HCT116 (cell line): ENCODE measurements at regions of chr5 and their contacts with region 1.

Region 1: DNA sequence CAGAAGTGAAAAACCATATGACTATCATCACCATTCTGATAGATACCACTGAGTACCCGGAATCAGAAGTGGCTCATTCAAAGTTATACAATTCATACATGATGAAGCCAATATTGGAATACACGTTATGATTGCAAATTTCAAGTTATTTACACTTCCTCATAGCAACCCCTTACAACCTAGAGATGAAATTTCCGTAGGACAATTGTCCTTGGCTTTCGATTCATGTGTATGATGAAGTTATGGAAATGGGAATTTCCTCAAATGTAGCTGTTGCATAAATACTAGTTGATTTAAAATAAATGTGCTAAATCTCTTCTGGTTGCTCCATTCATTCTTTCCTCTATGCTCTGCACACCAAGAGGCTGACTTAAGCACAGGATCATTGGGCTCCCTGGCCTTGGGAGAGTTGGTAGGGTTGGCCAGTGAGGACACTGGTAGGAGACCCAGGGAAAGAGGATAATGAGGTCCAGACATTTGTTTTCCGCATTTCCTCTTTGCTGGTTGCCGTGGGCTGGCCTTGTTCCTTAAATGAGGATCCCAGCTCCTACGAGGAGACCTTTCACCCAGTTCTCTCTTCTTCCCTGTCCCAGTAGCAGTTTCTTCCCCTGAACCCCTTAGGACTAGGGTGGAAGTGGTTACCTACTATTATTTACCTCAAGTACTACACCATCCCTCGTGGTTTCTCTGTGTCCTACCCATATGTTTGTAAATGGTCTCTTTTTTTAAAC is 90.3 kb downstream of the ZNF474 start:
- DNase-seq: no peak
- ATAC-seq: no peak
- H3K4me3 ChIP-seq: no peak overlapping the region
- H3K27ac ChIP-seq: no peak overlapping the region
- H3K4me1 ChIP-seq: no peaks in the 10 kb centered on the region
- H3K27me3 ChIP-seq: no peaks in the 10 kb centered on the region
- CTCF ChIP-seq: no peak
- POLR2A ChIP-seq: no peak
- RAD21 ChIP-seq: no peak

Region 2: DNA sequence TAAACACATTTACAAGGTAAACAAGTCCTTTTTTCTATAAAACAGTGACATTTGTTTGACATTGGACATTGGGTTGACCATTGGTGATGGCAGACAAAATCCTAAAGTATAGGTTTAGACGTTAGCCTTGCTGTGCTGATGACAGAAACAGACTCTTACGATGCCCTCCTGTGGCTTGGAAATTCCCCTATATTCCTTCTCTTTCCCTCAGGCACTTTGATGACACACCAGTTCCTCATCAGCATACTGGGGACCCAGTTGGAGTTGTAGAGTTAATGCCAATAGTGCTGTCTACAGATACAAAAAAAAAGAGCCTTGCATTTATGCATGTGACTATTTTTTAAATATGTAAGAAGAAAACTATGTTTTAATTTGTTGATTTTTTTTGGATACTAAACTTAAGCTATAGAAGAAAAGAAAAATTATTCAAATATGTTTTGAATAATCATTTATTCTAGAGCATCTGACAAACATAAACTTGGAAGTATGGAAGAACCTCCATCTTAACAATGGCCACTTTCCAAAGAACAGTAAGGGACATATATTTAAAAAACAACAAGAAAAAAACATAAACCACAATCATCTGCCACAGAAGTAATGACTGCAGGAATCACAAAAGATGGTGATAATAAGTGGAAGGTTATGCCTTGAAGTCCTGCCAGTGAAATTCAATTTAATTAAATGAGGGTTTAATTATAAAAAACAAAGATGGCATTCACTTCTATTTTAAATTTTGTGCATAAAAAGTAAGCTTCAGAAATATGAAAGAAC is 16.9 kb after region 1 on chr5:
- CTCF ChIA-PET with region 1: no interaction called
- POLR2A ChIA-PET with region 1: no interaction called
- RAD21 ChIA-PET with region 1: no interaction called
- intact Hi-C with region 1: loop called (anchors 1 kb)
- DNase-seq: no peak
- ATAC-seq: no peak
- H3K4me3 ChIP-seq: no peak overlapping the region
- H3K27ac ChIP-seq: no peak overlapping the region
- H3K4me1 ChIP-seq: no peaks in the 10 kb centered on the region
- H3K27me3 ChIP-seq: no peaks in the 10 kb centered on the region
- CTCF ChIP-seq: no peak
- POLR2A ChIP-seq: no peak
- RAD21 ChIP-seq: no peak